CD8-positive, alpha-beta memory T cell (primary cell): ENCODE measurements at regions of chr1 and their contacts with region 1.

Region 1: DNA sequence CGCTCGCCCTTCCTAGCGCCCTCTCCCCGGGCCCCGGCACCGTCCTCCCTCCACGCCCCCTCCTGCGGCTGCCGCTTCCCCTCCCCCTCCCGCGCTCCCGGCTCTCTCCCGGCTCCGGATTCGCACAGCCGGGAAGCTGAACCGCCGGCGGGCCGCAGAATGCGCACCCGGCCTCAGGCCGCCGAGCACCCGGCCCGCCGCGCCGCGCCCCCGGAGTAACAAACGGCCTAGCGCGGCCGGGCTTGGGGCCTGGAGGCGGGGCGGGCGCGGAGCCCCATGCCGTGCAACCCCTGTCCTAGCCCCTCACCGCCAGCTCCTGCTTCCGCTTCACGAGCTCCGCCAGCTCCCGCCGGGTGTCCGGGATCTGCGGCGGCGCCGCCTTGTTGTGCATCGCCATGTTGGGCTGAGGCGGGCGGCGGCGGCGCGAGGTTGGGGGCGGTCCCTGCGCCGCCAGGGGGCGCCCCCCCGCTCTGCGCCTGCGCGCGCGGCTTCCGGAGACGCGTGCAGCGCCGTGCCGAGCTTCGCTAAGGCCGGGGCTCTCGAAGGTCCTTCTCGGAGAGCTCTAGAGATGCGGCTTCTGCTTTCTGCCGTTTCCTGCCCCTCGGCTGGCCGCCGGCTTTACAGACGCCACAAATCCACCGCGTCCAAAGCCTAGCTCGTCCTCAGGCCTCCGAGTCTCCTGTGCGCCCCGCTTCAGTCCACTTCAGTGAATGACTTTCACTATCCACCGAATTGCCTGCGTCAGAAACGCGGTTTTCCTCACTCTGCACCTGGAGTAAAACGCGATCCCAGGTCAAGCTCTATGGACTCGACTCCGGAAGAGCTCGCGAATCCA is at the start of gene MEAF6:
- DNase-seq: peak; percentile 81 to 88 (median 84)
- H3K4me3 ChIP-seq: peak within 1 kb of the TSS; percentile 81
- H3K4me3 Mint-ChIP-seq: peak within 1 kb of the TSS; percentile 96 to 100 (median 99)
- H3K27ac ChIP-seq: peak within 1 kb of the TSS; percentile 84
- H3K27ac Mint-ChIP-seq: peak within 1 kb of the TSS; percentile 97 to 100 (median 99)
- H3K4me1 ChIP-seq: peaks cover 27% of the 10 kb centered on the region
- H3K4me1 Mint-ChIP-seq: peaks cover 45 to 55% (median 49%) of the 10 kb centered on the region in 3 donors
- H3K27me3 ChIP-seq: no peaks in the 10 kb centered on the region
- H3K27me3 Mint-ChIP-seq: no peaks in the 10 kb centered on the region
- total RNA-seq, gene MEAF6: 102 to 113 TPM

Region 2: GRCh38 chr1:37479255-37480124 is 35.1 kb before region 1 on chr1:
- CTCF ChIA-PET with region 1: interaction called, 20 read pairs
- POLR2A ChIA-PET with region 1: interaction called, 29 read pairs
- DNase-seq: peak; percentile 77 to 95 (median 84)
- H3K4me3 ChIP-seq: peak overlapping the region; percentile 99
- H3K4me3 Mint-ChIP-seq: peak overlapping the region; percentile 93 to 98 (median 95)
- H3K27ac ChIP-seq: peak overlapping the region; percentile 98
- H3K27ac Mint-ChIP-seq: peak overlapping the region; percentile 97 to 100 (median 99)
- H3K4me1 ChIP-seq: peaks cover 48% of the 10 kb centered on the region
- H3K4me1 Mint-ChIP-seq: peaks cover 29 to 55% (median 40%) of the 10 kb centered on the region in 3 donors
- H3K27me3 ChIP-seq: no peaks in the 10 kb centered on the region
- H3K27me3 Mint-ChIP-seq: no peaks in the 10 kb centered on the region

Region 3: DNA sequence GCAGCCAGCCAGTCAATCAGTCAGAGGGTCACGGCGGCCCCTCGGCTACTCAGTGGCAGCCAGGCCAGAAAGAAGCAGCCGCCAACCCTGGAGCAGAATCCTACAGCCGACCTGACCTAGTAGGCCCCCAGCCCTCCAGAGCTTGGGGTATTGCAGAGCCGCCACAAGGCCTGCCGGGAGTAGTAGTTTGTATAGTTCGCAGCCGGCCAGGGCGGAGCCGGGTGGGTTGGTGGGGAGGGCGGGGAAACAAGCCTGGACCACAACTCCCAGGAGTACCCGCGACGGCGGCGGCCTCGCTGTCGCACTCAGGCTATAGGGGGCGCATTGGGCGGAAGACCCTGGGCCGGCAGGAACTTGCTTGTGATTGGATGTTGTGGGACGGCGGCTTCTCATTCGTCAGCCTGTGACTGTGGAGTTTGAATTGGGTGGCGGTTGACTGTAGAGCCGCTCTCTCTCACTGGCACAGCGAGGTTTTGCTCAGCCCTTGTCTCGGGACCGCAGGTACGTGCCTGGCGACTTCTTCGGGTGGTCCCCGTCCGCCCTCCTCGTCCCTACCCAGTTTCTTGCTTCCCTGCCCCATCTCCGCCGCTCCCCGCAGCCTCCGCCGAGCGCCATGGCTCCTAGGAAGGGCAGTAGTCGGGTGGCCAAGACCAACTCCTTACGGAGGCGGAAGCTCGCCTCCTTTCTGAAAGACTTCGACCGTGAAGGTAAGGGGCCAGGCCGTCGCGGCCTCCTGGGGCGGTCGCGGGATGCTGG is 177.7 kb after region 1 on chr1 and contains the start of gene CDCA8:
- CTCF ChIA-PET with region 1: interaction called, 4 read pairs
- POLR2A ChIA-PET with region 1: interaction called, 14 read pairs
- DNase-seq: peak; percentile 97 to 99 (median 98)
- H3K4me3 ChIP-seq: peak within 1 kb of the TSS; percentile 84
- H3K4me3 Mint-ChIP-seq: peak within 1 kb of the TSS; percentile 91 to 99 (median 94)
- H3K27ac ChIP-seq: peak within 1 kb of the TSS; percentile 79
- H3K27ac Mint-ChIP-seq: peak within 1 kb of the TSS; percentile 80 to 96 (median 90)
- H3K4me1 ChIP-seq: peaks cover 28% of the 10 kb centered on the region
- H3K4me1 Mint-ChIP-seq: peaks cover 36 to 46% (median 38%) of the 10 kb centered on the region in 3 donors
- H3K27me3 ChIP-seq: no peaks in the 10 kb centered on the region
- H3K27me3 Mint-ChIP-seq: no peaks in the 10 kb centered on the region
- total RNA-seq, gene CDCA8: 37.4 to 39.6 TPM